Calu3 (cell line): ENCODE measurements at regions of chr10 and their contacts with region 1.

Region 1: GRCh38 chr10:2284071-2284470 is 546.7 kb upstream of the ADARB2 start:
- DNase-seq: no peak
- H3K4me3 Mint-ChIP-seq: no peak overlapping the region
- H3K27ac Mint-ChIP-seq: no peak overlapping the region
- H3K4me1 Mint-ChIP-seq: no peaks in the 10 kb centered on the region
- H3K27me3 Mint-ChIP-seq: peaks cover 13% of the 10 kb centered on the region
- CTCF ChIP-seq: no peak

Region 2: DNA sequence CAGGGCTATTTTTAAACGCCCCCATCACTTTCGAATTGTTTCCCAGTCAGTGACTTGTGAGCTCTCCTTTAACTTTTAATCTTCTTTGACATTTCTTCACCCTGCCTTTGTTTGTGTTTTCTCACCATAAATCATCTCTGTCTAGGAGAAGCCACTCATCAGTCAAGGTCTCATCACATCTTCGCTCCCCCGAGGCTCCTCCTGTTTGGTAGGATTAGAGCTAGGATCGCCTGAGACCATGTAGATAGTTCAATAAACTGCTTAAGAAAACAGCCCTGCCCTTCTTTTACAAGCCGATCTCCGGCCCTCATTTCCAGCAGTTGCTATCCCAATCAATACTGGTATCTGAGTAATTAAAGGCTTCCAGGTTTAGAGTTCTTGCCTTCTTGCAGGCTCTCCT is 74.0 kb before region 1 on chr10:
- CTCF ChIA-PET with region 1: no interaction called
- intact Hi-C with region 1: loop called (anchors 2 kb)
- DNase-seq: no peak
- H3K4me3 Mint-ChIP-seq: no peak overlapping the region
- H3K27ac Mint-ChIP-seq: no peak overlapping the region
- H3K4me1 Mint-ChIP-seq: peaks cover 7% of the 10 kb centered on the region
- H3K27me3 Mint-ChIP-seq: no peaks in the 10 kb centered on the region
- CTCF ChIP-seq: no peak